GM12878 (cell line): ENCODE measurements at regions of chr17 and their contacts with region 1.

Region 1: DNA sequence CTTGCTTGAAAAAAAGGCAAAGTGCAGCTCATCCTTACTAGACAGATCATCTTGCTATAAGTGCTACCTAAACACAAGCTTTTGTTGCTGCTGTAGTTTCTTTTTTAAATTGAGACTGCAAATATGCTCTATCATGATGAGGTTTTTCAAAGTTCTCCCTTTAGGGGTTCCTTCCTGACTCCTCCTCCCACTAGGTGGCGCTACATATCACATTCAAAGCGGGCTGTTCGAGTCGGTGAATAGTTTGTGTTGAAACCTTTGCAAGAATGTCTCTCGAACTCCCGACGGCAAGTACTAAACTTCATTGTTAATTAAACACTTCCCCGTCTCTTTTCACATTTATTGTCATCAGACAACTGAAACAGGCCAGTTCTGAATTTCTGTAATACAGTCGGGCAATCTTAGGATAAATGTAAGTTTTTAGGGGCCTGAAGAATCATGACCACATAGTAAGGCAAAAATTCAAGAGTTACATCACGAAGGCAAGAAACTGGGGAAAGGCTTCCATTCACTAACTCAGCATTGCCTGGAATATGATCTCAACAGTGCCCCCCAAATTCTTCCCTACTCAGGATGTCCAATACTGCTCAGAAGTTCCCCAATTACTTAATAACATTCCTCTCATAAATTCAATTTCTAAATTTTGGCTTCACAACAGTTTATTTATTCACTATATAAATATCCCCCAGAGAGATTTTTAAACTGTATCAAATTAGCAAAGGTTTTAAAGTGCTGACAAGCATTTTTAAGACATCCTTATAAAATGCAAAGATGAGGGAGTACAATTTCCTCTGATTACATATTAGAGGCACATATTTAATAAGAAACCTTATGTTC is 6.7 kb downstream of the HS3ST3A1 start:
- DNase-seq: peak; percentile 2
- ATAC-seq: peak; percentile 70
- H3K4me3 ChIP-seq: no peak overlapping the region
- H3K27ac ChIP-seq: no peak overlapping the region
- H3K4me1 ChIP-seq: no peaks in the 10 kb centered on the region
- H3K27me3 ChIP-seq: no peaks in the 10 kb centered on the region
- CTCF ChIP-seq: peak; percentile 72 to 81 (median 74)
- EP300 ChIP-seq: no peak
- POLR2A ChIP-seq: no peak
- RAD21 ChIP-seq: peak; percentile 79

Region 2: GRCh38 chr17:13337864-13338371 is 257.1 kb before region 1 on chr17:
- CTCF ChIA-PET with region 1: interaction called, 11 read pairs
- POLR2A ChIA-PET with region 1: no interaction called
- RAD21 ChIA-PET with region 1: interaction called, 7 read pairs
- SMC1A ChIA-PET with region 1: interaction called, 11 read pairs
- in situ Hi-C with region 1: no loop called
- intact Hi-C with region 1: loop called (anchors 5 kb)
- DNase-seq: no peak
- ATAC-seq: no peak
- H3K4me3 ChIP-seq: no peak overlapping the region
- H3K27ac ChIP-seq: no peak overlapping the region
- H3K4me1 ChIP-seq: no peaks in the 10 kb centered on the region
- H3K27me3 ChIP-seq: no peaks in the 10 kb centered on the region
- CTCF ChIP-seq: peak; percentile 48 to 69 (median 60); a peak in 5 of 6 replicates
- EP300 ChIP-seq: no peak
- POLR2A ChIP-seq: no peak
- RAD21 ChIP-seq: peak; percentile 59

Region 3: GRCh38 chr17:13550291-13550690 is 44.7 kb before region 1 on chr17:
- CTCF ChIA-PET with region 1: no interaction called
- POLR2A ChIA-PET with region 1: no interaction called
- RAD21 ChIA-PET with region 1: no interaction called
- SMC1A ChIA-PET with region 1: no interaction called
- in situ Hi-C with region 1: no loop called
- intact Hi-C with region 1: no loop called
- DNase-seq: no peak
- ATAC-seq: no peak
- H3K4me3 ChIP-seq: no peak overlapping the region
- H3K27ac ChIP-seq: no peak overlapping the region
- H3K4me1 ChIP-seq: no peaks in the 10 kb centered on the region
- H3K27me3 ChIP-seq: no peaks in the 10 kb centered on the region
- CTCF ChIP-seq: no peak
- EP300 ChIP-seq: no peak
- POLR2A ChIP-seq: no peak
- RAD21 ChIP-seq: no peak

Region 4: GRCh38 chr17:13665872-13666635 is 71.1 kb after region 1 on chr17:
- CTCF ChIA-PET with region 1: no interaction called
- POLR2A ChIA-PET with region 1: no interaction called
- RAD21 ChIA-PET with region 1: no interaction called
- SMC1A ChIA-PET with region 1: no interaction called
- in situ Hi-C with region 1: no loop called
- intact Hi-C with region 1: no loop called
- DNase-seq: no peak
- ATAC-seq: no peak
- H3K4me3 ChIP-seq: no peak overlapping the region
- H3K27ac ChIP-seq: no peak overlapping the region
- H3K4me1 ChIP-seq: no peaks in the 10 kb centered on the region
- H3K27me3 ChIP-seq: no peaks in the 10 kb centered on the region
- CTCF ChIP-seq: no peak
- EP300 ChIP-seq: no peak
- POLR2A ChIP-seq: no peak
- RAD21 ChIP-seq: no peak

Region 5: DNA sequence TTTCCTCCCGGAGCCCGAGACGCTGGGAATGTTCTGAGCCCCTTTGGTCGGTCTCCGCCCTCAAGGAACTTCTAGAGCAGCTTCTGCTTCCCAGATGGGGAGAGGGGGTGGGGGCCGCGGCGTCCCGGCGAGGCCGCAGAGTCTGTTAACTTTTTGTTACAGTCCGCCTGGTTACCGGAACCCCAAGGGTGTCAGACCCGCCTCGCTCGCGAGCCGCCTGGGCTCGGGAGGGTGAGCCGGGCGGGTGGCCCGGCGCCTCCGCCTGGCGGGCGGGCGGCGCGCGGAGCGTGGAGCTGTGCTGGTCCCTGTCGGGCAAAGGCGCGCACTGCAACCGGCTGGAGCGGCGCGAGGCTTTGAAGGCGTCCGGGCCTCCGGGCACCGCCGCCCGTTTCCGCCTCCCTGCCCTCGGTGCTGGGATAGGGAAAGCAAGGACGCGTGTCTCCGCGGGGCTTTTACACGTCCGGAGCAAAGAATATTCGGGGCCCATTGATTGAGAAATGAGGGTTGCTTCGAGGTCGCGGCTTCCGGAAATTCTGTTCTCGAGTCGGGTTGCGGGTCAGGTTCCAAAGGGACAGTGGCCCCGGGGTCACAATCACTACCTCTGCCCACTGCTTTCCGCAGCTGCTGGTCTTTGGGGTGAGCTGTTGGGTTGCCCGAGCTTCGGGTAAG is 707.6 kb after region 1 on chr17:
- CTCF ChIA-PET with region 1: interaction called, 6 read pairs
- POLR2A ChIA-PET with region 1: no interaction called
- RAD21 ChIA-PET with region 1: interaction called, 4 read pairs
- SMC1A ChIA-PET with region 1: no interaction called
- in situ Hi-C with region 1: no loop called
- intact Hi-C with region 1: loop called (anchors 1 kb)
- DNase-seq: no peak
- ATAC-seq: peak; percentile 93
- H3K4me3 ChIP-seq: peak overlapping the region; percentile 56; the same call in 1 of the 2 replicates
- H3K27ac ChIP-seq: no peak overlapping the region
- H3K4me1 ChIP-seq: no peaks in the 10 kb centered on the region; the same call in 1 of the 2 replicates
- H3K27me3 ChIP-seq: peaks cover 7 to 30% of the 10 kb centered on the region in 2 experiments
- CTCF ChIP-seq: peak; percentile 52 to 82 (median 78); a peak in 5 of 6 replicates
- EP300 ChIP-seq: no peak
- POLR2A ChIP-seq: no peak
- RAD21 ChIP-seq: peak; percentile 80

Region 6: GRCh38 chr17:14310605-14311004 is 715.6 kb after region 1 on chr17:
- CTCF ChIA-PET with region 1: interaction called, 3 read pairs
- POLR2A ChIA-PET with region 1: no interaction called
- RAD21 ChIA-PET with region 1: no interaction called
- SMC1A ChIA-PET with region 1: no interaction called
- in situ Hi-C with region 1: loop called (anchors 5 kb)
- intact Hi-C with region 1: no loop called
- DNase-seq: no peak
- ATAC-seq: no peak
- H3K4me3 ChIP-seq: no peak overlapping the region
- H3K27ac ChIP-seq: no peak overlapping the region
- H3K4me1 ChIP-seq: no peaks in the 10 kb centered on the region
- H3K27me3 ChIP-seq: 0 out of 4 replicates have a peak, but pooled peaks cover 0 to 2% of the 10 kb centered on the region in 2 experiments
- CTCF ChIP-seq: no peak
- EP300 ChIP-seq: no peak
- POLR2A ChIP-seq: no peak
- RAD21 ChIP-seq: no peak

Region 7: DNA sequence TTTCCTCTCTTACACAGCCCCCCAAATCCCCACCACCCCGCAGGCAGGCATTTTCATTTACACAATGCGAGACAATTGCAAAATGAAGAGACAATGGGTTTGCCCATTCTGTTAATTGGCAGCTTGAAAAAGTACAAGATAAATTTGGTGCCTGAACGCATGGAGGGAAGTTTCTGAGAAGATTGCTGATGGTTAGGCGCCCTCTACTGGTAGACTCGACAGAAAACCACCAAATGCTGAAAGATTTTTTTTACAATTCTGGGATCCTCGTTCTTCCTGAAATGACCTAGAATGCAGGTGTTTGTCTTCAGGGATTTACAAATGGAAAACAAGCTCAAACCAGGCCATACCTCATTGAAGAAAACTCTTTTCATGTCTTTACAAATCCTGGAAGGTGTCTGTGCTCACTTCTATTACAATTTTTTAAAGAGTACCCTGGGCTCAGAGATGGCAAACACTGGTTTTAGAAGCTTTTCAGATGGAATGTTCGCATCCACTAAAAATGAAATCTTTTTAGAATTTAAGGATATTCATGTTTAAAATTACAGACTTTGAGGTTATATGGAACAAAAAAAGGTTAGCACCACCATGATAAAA is 1331.6 kb after region 1 on chr17:
- CTCF ChIA-PET with region 1: interaction called, 4 read pairs
- POLR2A ChIA-PET with region 1: no interaction called
- RAD21 ChIA-PET with region 1: interaction called, 3 read pairs
- SMC1A ChIA-PET with region 1: interaction called, 3 read pairs
- in situ Hi-C with region 1: loop called (anchors 5 kb)
- intact Hi-C with region 1: loop called (anchors 1 kb)
- DNase-seq: no peak
- ATAC-seq: no peak
- H3K4me3 ChIP-seq: no peak overlapping the region
- H3K27ac ChIP-seq: no peak overlapping the region
- H3K4me1 ChIP-seq: no peaks in the 10 kb centered on the region
- H3K27me3 ChIP-seq: no peaks in the 10 kb centered on the region
- CTCF ChIP-seq: peak; percentile 60 to 80 (median 68)
- EP300 ChIP-seq: no peak
- POLR2A ChIP-seq: no peak
- RAD21 ChIP-seq: peak; percentile 83

Region 8: DNA sequence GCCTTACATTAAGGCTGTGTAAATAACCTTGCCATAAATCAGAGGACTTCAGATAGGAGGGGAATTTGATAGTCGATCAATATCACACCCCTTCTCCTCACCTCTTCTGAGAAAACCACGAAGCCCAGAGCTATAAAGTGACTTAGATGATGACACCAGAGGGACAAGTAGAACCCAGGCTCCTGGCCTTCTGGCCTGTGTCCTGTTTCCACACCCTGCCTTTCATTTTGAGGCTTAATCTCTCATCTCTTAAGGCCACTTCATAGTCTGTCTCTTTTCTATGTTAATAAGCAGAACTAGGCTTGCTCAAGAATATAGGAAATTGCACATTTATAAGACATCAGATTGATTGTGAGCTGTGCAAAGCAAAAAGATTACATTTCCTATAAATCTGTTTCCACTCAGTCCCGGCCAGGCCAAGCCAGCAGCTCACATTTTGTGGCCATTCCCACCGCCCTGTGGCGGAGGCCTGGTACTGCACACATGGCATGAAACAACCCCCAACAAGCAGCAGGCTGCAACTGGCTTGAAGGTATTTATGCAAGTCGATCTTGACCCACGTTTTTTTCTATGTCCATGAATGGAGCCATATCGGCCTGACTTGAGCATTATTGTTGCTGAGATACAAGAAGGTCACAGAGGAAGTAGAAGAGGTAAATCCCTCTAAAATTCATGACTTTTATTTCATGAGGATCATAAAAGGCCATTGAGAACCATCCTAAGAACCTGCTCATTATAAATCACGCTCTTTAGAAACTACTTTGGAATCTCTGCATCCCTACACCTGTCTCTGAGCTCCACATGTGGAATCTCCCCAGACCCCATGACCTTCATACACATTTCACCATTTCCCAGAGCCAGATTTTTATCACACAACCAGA is 1576.4 kb after region 1 on chr17:
- CTCF ChIA-PET with region 1: no interaction called
- POLR2A ChIA-PET with region 1: no interaction called
- RAD21 ChIA-PET with region 1: no interaction called
- SMC1A ChIA-PET with region 1: no interaction called
- in situ Hi-C with region 1: no loop called
- intact Hi-C with region 1: loop called (anchors 10 kb)
- DNase-seq: no peak
- ATAC-seq: peak; percentile 46; the same call in 1 of the 3 replicates
- H3K4me3 ChIP-seq: no peak overlapping the region
- H3K27ac ChIP-seq: no peak overlapping the region
- H3K4me1 ChIP-seq: no peaks in the 10 kb centered on the region
- H3K27me3 ChIP-seq: no peaks in the 10 kb centered on the region
- CTCF ChIP-seq: peak; percentile 44 to 52 (median 48); a peak in 5 of 6 replicates
- EP300 ChIP-seq: no peak
- POLR2A ChIP-seq: no peak
- RAD21 ChIP-seq: peak; percentile 37